Transverse colon (tissue), 4 donors: ENCODE measurements at regions of chrX and their contacts with region 1.

Region 1: GRCh38 chrX:35622021-35622420 is 176.1 kb upstream of the MAGEB16 start:
- DNase-seq: no peak
- H3K4me3 ChIP-seq: no peak overlapping the region
- H3K27ac ChIP-seq: no peak overlapping the region
- H3K4me1 ChIP-seq: no peaks in the 10 kb centered on the region
- H3K27me3 ChIP-seq: no peaks in the 10 kb centered on the region
- CTCF ChIP-seq: no peak
- EP300 ChIP-seq: no peak
- POLR2A ChIP-seq: no peak

Region 2: DNA sequence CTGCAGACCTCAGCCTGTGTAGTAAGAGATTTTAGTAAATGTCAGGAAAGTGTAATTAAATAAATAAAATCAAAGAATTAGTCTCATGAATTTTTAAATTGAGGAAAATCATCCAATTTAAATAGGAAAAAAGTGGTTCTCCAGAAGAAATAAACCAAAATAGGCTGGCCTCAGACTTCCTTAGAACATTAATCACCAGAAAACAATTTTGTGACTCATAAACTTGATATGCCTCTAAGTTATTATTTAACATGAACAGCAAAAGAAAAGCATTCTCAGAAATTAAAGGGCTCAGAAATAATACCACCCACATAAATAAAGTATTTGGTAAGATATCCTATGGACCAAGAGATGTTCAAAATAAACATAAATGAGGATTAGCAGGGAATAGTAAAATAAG is 665.1 kb before region 1 on chrX:
- in situ Hi-C with region 1: no loop called
- intact Hi-C with region 1: no loop called
- DNase-seq: no peak
- H3K4me3 ChIP-seq: no peak overlapping the region
- H3K27ac ChIP-seq: no peak overlapping the region
- H3K4me1 ChIP-seq: no peaks in the 10 kb centered on the region
- H3K27me3 ChIP-seq: no peaks in the 10 kb centered on the region
- CTCF ChIP-seq: no peak
- EP300 ChIP-seq: no peak
- POLR2A ChIP-seq: no peak

Region 3: DNA sequence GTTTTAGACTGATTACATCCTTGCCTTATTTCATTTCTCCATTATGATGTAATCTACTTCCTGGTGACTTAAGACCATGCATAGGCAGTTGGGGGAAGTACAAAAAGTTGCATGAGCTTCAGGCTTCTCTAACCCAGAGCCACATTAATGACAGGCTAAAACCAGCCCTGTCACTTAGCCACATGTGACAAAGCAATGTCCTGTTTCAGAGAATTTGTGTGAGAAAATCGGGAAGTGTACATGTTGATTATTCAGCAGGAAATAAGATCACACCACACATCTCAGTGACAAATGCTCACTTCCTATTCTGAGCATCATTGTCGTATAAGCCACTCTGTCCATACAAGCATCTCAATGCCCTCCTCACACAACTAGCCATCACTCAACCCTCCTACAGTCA is 77.6 kb after region 1 on chrX:
- in situ Hi-C with region 1: loop called in 1 of 4 experiments (anchors 25 kb)
- intact Hi-C with region 1: no loop called
- DNase-seq: no peak
- H3K4me3 ChIP-seq: no peak overlapping the region
- H3K27ac ChIP-seq: no peak overlapping the region
- H3K4me1 ChIP-seq: no peaks in the 10 kb centered on the region
- H3K27me3 ChIP-seq: no peaks in the 10 kb centered on the region
- CTCF ChIP-seq: no peak
- EP300 ChIP-seq: no peak
- POLR2A ChIP-seq: no peak

Region 4: DNA sequence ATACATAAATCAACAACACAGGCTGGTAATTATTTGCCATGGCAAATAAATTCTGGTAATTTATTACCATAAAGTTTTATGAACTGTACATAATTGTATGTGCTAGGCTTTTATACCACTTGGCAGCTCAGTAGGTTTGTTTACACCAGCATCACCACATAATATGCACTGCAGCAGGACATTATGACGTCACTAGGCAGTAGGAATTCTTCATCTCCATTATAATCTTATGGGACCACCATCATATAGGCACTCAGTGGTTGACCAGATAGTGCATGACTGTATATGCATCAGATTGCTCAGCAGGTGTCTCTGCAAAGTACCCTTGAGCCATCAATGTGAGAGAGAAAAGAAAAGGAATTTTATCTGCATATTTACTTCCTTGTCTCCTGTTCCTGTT is 592.9 kb after region 1 on chrX:
- in situ Hi-C with region 1: no loop called
- intact Hi-C with region 1: no loop called
- DNase-seq: no peak
- H3K4me3 ChIP-seq: no peak overlapping the region
- H3K27ac ChIP-seq: no peak overlapping the region
- H3K4me1 ChIP-seq: no peaks in the 10 kb centered on the region
- H3K27me3 ChIP-seq: no peaks in the 10 kb centered on the region
- CTCF ChIP-seq: no peak
- EP300 ChIP-seq: no peak
- POLR2A ChIP-seq: no peak